HEK293 (cell line): ENCODE measurements at regions of chr6 and their contacts with region 1.

Region 1: GRCh38 chr6:159654483-159655098 is 38.5 kb downstream of the SOD2 start:
- H3K4me3 ChIP-seq: no peak overlapping the region
- H3K27ac ChIP-seq: no peak overlapping the region
- H3K4me1 ChIP-seq: no peaks in the 10 kb centered on the region
- CTCF ChIP-seq: peak; percentile 44; the same call in 1 of the 2 replicates

Region 2: DNA sequence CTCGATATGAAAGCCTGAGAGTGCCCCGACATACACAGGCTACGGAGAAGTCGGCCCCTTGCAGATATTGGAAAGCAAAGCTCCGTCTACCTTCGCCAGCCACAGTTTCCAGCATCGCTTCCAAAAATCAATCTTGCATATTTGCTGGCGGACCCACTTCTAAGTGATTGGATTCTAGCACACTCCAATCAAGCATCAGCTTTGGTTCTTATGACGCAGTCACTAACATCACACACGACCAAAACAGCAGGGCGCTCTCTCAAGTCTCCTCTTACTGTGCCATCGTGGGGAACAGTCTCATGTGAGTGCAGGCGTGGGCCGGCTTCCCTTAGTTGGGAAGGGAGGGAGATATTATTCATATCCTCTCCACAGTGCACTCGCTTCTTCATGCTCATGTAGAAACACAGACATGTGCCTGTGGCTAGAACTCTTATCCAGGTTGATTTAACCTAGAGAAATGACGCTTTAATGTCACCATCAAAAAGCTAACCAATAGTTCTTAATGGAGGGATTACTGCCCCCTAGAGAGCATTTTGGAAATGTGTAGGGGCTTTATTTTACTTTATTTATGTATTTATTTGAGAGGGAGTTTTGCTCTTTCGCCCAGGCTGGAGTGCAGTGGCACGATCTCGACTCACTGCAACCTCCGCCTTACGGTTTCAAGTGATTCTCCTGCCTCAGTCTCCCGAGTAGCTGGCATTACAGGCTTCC is 191.3 kb before region 1 on chr6:
- CTCF ChIA-PET with region 1: interaction called, 10 read pairs
- POLR2A ChIA-PET with region 1: no interaction called
- H3K4me3 ChIP-seq: no peak overlapping the region
- H3K27ac ChIP-seq: no peak overlapping the region
- H3K4me1 ChIP-seq: peaks cover 5% of the 10 kb centered on the region; the same call in 1 of the 2 replicates
- CTCF ChIP-seq: no peak

Region 3: DNA sequence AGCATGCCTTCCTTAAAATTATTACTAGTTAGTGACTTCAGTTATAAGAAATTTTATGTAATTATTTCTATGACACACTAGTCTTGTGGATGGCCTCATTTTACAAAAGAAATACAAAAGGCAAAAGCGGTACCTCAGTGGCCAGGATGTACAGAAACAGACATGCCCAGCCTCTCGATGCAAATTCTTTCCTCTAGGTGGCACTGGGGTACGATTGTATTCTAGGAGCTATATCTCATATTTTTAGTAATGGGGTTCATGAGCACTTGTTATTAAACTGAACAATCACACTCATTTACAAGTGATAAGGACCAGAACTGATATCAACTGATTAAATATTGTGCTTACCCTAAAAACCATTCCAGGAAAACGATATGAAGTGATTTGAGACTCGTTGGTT is 21.4 kb before region 1 on chr6:
- CTCF ChIA-PET with region 1: interaction called, 35 read pairs
- POLR2A ChIA-PET with region 1: no interaction called
- H3K4me3 ChIP-seq: no peak overlapping the region
- H3K27ac ChIP-seq: no peak overlapping the region
- H3K4me1 ChIP-seq: no peaks in the 10 kb centered on the region
- CTCF ChIP-seq: no peak

Region 4: GRCh38 chr6:159682295-159682694 is 27.7 kb after region 1 on chr6:
- CTCF ChIA-PET with region 1: interaction called, 11 read pairs
- POLR2A ChIA-PET with region 1: no interaction called
- H3K4me3 ChIP-seq: no peak overlapping the region
- H3K27ac ChIP-seq: no peak overlapping the region
- H3K4me1 ChIP-seq: no peaks in the 10 kb centered on the region
- CTCF ChIP-seq: no peak

Region 5: GRCh38 chr6:159941286-159942113 is 286.9 kb after region 1 on chr6:
- CTCF ChIA-PET with region 1: no interaction called
- POLR2A ChIA-PET with region 1: no interaction called
- H3K4me3 ChIP-seq: no peak overlapping the region
- H3K27ac ChIP-seq: no peak overlapping the region
- H3K4me1 ChIP-seq: no peaks in the 10 kb centered on the region
- CTCF ChIP-seq: peak; percentile 69

Region 6: GRCh38 chr6:160069050-160069454 is 414.5 kb after region 1 on chr6:
- CTCF ChIA-PET with region 1: no interaction called
- POLR2A ChIA-PET with region 1: no interaction called
- H3K4me3 ChIP-seq: no peak overlapping the region
- H3K27ac ChIP-seq: no peak overlapping the region
- H3K4me1 ChIP-seq: no peaks in the 10 kb centered on the region
- CTCF ChIP-seq: no peak